ENCODE measurements at regions of chr5 and their contacts with region 1.

Region 1: DNA sequence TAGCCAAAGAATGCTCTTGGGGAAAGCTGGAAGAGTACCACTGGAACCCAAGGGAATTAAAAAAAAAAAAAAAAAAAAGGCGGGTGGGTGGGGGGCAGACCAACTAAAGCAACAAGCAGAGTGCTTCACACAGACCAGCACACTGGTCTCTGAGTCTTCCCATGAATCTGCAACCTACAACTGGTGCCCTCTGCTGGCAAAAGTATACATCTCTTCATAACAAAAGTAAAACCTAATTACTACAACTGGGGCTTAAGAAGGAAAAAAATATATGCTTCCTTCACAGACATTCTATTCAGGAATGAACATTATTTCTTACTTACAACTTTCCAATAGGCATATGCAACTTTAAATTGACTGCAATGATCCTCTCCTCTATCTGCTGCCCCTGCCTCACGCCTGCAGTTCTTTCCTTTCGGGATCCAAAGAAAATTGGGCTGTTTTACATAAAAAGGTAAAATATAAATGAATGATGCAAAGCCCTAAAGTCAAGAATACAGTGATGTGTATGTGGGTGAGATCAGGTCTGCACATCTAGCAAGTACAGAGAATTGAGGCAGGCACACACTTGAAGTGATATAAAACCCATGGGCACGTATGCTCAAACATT is 7.2 kb upstream of the KLHL3 start:
- DNase-seq: peak; percentile 68
- ATAC-seq: peak; percentile 89
- H3K4me3 Mint-ChIP-seq: no peak overlapping the region
- H3K27ac Mint-ChIP-seq: no peak overlapping the region
- H3K4me1 Mint-ChIP-seq: peaks cover 13% of the 10 kb centered on the region
- H3K27me3 Mint-ChIP-seq: no peaks in the 10 kb centered on the region
- CTCF ChIP-seq: peak; percentile 64

Region 2: DNA sequence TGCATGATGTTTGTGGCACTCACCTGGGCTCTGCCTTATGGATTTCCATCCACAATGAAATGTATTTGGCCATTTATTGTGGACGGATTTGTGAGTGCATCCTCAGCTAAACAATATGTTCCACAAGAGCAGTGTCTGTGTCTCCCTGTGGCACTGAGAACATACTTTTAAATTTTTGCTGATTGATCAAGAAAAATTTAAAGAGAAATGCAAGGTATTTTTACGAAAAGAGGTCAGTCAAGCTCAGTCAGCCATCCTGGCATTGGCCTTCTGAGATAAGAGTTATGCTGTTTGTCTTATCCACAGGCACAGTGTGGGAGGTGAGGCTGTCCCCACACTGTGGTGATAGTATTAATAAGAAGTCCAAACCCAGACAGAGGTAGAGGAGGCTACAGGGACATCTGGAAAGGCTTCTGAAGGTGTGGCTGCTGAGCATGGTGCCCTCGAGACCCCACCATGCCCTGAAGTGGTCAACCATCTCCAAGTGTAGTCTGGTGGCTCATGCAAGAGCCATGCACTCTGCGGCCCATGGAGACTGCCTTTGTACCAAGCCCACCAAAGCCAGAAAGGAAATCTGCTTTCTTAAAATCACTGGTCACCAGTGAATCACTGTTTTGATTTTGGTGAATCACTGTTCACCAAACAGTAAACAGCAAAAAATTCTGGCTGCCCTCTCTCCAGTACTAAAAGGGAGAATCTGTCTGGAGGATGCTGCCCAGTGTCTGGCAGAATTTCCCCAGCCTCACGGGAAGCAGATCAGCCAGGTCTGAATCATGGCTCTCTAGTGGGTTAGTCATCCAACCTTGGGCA is 272.8 kb before region 1 on chr5:
- CTCF ChIA-PET with region 1: no interaction called
- POLR2A ChIA-PET with region 1: no interaction called
- intact Hi-C with region 1: no loop called
- DNase-seq: no peak
- ATAC-seq: no peak
- H3K4me3 Mint-ChIP-seq: no peak overlapping the region
- H3K27ac Mint-ChIP-seq: no peak overlapping the region
- H3K4me1 Mint-ChIP-seq: no peaks in the 10 kb centered on the region
- H3K27me3 Mint-ChIP-seq: peaks cover 8% of the 10 kb centered on the region
- CTCF ChIP-seq: no peak

Region 3: GRCh38 chr5:137580030-137580429 is 163.1 kb before region 1 on chr5:
- CTCF ChIA-PET with region 1: no interaction called
- POLR2A ChIA-PET with region 1: no interaction called
- intact Hi-C with region 1: no loop called
- DNase-seq: no peak
- ATAC-seq: no peak
- H3K4me3 Mint-ChIP-seq: no peak overlapping the region
- H3K27ac Mint-ChIP-seq: no peak overlapping the region
- H3K4me1 Mint-ChIP-seq: no peaks in the 10 kb centered on the region
- H3K27me3 Mint-ChIP-seq: peaks cover 10% of the 10 kb centered on the region
- CTCF ChIP-seq: no peak

Region 4: GRCh38 chr5:137629646-137630045 is 113.5 kb before region 1 on chr5:
- CTCF ChIA-PET with region 1: interaction called, 110 read pairs
- POLR2A ChIA-PET with region 1: interaction called, 3 read pairs
- intact Hi-C with region 1: loop called (anchors 1 kb)
- DNase-seq: peak; percentile 8
- ATAC-seq: peak; percentile 82
- H3K4me3 Mint-ChIP-seq: no peak overlapping the region
- H3K27ac Mint-ChIP-seq: no peak overlapping the region
- H3K4me1 Mint-ChIP-seq: no peaks in the 10 kb centered on the region
- H3K27me3 Mint-ChIP-seq: no peaks in the 10 kb centered on the region
- CTCF ChIP-seq: peak; percentile 94

Region 5: GRCh38 chr5:137660349-137660817 is 82.8 kb before region 1 on chr5:
- CTCF ChIA-PET with region 1: interaction called, 540 read pairs
- POLR2A ChIA-PET with region 1: interaction called, 4 read pairs
- intact Hi-C with region 1: loop called (anchors 1 kb)
- DNase-seq: peak; percentile 90
- ATAC-seq: peak; percentile 97
- H3K4me3 Mint-ChIP-seq: no peak overlapping the region
- H3K27ac Mint-ChIP-seq: no peak overlapping the region
- H3K4me1 Mint-ChIP-seq: peaks cover 9% of the 10 kb centered on the region
- H3K27me3 Mint-ChIP-seq: no peaks in the 10 kb centered on the region
- CTCF ChIP-seq: peak; percentile 76

Region 6: DNA sequence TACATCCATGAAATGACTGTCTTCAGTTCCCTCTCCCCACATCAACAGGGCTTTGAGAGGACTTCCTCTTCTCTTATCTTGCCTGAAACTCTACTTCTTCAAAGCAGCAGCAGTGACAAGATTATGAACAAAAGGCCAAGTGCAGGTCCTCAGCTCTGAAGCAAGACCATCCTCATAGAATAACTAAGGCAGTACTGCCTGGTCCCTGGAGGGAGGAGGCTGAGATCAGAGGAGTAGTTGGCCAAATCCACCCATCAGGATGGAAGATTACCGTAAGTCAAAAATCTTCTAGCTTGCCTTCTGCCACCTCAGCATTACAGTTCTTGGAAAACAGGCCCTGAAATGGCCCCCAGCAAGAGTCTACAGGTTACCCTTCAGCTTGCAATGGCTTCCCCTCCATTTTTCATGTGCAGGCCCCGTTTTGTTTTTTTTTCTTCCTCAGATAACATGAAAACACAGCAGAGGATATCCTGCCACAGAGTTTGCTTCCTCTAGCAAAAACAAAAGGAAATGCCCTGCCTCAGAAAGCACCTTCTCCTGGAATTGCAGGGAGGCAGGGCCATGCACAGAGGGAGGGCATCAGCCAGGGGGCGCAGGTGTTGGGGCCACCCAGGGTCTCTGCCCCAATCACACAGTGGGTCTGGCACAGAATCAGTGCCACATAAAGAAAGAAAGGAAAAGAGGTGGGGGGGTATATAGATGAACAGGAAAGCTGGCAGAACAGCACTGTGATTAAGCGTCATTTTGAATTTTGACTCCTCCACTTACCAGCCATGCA is 47.3 kb before region 1 on chr5:
- CTCF ChIA-PET with region 1: interaction called, 38 read pairs
- POLR2A ChIA-PET with region 1: interaction called, 15 read pairs
- intact Hi-C with region 1: loop called (anchors 5 kb)
- DNase-seq: peak; percentile 15
- ATAC-seq: peak; percentile 53
- H3K4me3 Mint-ChIP-seq: peak overlapping the region; percentile 39
- H3K27ac Mint-ChIP-seq: peak overlapping the region; percentile 92
- H3K4me1 Mint-ChIP-seq: peaks cover 40% of the 10 kb centered on the region
- H3K27me3 Mint-ChIP-seq: no peaks in the 10 kb centered on the region
- CTCF ChIP-seq: peak; percentile 26

Region 7: GRCh38 chr5:137728048-137728447 is 15.1 kb before region 1 on chr5:
- CTCF ChIA-PET with region 1: interaction called, 51 read pairs
- POLR2A ChIA-PET with region 1: interaction called, 4 read pairs
- intact Hi-C with region 1: no loop called
- DNase-seq: no peak
- ATAC-seq: no peak
- H3K4me3 Mint-ChIP-seq: no peak overlapping the region
- H3K27ac Mint-ChIP-seq: no peak overlapping the region
- H3K4me1 Mint-ChIP-seq: peaks cover 27% of the 10 kb centered on the region
- H3K27me3 Mint-ChIP-seq: no peaks in the 10 kb centered on the region
- CTCF ChIP-seq: no peak

Region 8: DNA sequence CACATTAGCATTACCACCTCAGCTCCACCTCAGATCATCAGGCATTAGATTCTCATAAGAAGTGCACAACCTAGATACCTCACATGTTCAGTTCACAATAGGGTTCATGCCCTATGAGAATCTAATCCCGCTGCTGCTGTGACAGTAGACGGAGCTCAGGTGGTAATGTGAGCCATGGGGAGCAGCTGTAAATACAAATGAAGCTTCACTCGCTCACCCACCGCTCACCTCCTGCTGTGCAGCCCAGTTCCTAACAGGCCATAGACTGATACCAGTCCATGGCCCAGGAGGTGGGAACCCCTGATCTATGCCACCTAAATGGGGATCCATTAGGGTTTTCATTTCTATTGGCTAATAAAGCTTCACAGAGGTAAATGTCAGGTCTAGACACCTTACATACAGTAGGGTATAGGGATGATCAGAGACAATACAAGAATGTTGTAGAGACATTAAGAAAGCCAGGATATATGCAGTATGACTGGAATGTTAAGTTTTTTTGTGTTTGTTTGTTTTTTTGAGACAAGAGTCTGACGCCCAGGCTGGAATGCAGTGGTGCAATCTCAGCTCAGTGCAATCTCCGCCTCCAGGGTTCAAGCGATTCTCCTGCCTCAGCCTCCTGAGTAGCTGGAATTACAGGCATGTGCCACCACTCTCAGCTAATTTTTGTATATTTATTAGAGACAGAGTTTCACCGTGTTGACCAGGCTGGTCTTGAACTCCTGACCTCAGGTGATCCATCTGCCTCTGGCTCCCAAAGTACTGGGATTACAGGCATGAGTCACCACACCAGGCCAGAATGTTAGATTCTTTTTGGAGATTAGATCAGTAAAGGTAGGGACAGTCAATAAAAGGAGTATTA is 17.4 kb after region 1 on chr5:
- CTCF ChIA-PET with region 1: interaction called, 10 read pairs
- POLR2A ChIA-PET with region 1: interaction called, 23 read pairs
- intact Hi-C with region 1: no loop called
- DNase-seq: no peak
- ATAC-seq: no peak
- H3K4me3 Mint-ChIP-seq: no peak overlapping the region
- H3K27ac Mint-ChIP-seq: no peak overlapping the region
- H3K4me1 Mint-ChIP-seq: no peaks in the 10 kb centered on the region
- H3K27me3 Mint-ChIP-seq: peaks cover 2% of the 10 kb centered on the region
- CTCF ChIP-seq: no peak

Measured in activated CD8-positive, alpha-beta T cell treated with anti-CD3 and anti-CD28 coated beads for 36 hours (primary cell).